Posterior cingulate gyrus (tissue), 11 donors: ENCODE measurements at regions of chr1 and their contacts with region 1.

Region 1: GRCh38 chr1:9292361-9293240 is at the start of gene SPSB1:
- DNase-seq: peak; percentile 53 to 95 (median 69)

Region 2: DNA sequence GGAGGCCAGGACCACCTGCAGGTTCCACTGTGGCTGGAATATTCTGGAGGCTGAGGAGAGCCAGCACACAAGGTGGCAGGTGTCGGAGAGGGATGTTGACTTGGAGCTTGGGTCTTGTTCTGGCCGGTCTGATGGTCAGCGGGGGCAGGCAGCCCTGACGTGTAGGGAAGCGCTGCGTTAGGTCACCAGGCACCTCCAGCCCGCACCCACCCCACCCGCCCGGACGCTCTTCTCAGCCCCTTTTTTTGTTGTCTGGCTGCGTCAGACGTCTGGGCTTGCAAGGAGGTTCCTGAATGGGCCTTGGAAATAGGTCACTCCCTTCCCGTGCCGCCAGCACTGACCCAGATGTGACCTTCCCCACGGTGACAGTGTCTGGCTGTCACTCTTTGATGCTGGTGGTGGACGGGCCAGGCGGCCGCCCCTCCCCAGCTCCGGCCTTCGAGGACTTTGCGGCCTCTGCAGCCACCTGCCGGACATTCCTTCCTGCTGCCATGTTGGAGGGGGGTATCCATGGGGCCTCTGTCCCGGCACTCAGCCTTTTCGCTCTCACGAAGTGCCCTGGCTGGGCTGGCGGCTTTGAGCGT is 30.2 kb after region 1 on chr1:
- intact Hi-C with region 1: loop called (anchors 2 kb)
- DNase-seq: peak in 4 of 10 donors; percentile 28 to 49 (median 35)

Region 3: GRCh38 chr1:9388335-9389180 is 96.0 kb after region 1 on chr1:
- intact Hi-C with region 1: loop called (anchors 5 kb)
- DNase-seq: peak; percentile 77 to 98 (median 88)

Region 4: GRCh38 chr1:9428601-9429341 is 136.2 kb after region 1 on chr1:
- intact Hi-C with region 1: loop called (anchors 1 kb)
- DNase-seq: peak; percentile 99 to 100 (median 99)

Region 5: DNA sequence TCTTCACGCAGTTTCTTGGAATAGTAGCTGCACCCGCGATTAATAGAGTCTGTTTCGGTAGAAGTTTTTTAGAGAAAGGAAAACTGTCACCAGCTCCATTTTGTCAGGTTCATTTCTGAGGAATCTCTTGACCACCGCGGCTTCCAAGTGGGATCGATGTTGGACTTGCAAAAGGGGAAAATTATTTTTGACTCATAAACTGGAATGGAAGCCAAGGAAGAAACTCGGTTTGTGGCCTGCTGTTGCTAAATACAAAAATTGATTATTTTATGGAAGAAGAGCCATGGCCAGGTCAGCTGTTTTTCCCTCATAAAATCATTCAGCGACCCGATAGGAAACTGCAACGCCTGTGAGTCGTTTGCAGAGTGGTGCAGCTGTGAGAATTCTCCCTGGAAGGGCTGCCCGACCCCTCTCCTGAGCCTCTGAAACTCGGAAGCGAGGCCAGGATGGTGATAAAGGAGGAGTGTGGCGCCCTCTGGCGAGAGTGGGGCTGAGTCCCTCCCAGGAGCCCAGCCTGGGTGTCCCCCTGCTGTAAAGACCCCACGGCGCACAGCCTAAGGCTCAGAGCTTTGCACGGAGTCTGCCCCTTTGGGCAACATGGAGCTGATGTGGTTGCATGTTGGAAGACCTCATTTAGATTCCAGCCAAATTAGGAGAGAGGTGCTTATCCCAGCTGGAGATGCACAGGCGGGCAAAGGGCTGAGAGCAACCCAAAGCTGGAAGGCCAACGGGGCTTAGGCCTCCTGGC is 163.1 kb after region 1 on chr1:
- intact Hi-C with region 1: loop called (anchors 1 kb)
- DNase-seq: peak; percentile 32 to 95 (median 74)

Region 6: GRCh38 chr1:9494929-9495758 is 202.5 kb after region 1 on chr1:
- intact Hi-C with region 1: loop called (anchors 1 kb)
- DNase-seq: peak in 7 of 10 donors; percentile 22 to 93 (median 40)

Region 7: DNA sequence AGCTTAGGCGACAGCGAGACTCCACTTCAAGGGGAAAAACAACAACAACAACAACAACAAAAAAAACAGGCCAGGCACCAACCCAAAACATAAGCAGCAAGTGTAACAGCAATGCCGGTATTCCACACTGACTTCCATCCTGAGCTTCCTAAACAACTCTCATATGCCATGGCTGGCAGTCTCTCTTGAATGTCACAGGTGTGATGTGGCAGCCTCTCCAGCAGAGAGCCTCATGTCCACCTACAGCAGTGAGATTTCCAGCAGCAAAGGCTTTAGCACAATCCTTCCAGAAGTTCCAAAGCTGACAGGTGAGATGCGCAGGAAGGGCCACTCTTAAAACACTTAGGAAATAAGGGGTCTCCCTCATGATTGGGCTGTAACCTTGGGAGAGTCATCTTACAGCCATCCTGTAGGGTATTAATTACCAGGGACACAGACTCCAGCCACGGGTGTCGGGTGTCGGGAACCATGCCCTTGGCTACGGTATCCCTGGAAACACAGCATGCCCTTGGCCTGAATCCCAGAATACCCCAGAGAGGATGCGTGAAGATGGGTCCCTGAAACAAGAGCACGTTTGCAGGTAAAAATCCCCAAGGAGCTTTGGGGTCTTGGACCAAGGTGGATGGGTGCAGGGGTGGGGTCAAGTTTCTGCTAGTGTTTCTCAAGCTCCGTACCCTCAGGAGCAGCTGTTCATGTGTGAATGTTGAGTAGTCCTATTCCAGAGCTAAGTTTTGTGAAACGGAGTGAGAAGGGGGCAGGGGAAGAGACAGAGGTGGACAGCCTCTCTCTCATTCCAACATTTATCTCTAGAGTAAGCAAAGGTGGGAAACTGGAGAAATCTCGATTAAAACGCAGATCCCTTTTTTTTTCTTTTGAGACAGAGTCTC is 499.8 kb after region 1 on chr1:
- intact Hi-C with region 1: no loop called
- DNase-seq: peak in 1 of 10 donors; percentile 40